Lower leg skin (tissue), 4 donors: ENCODE measurements at regions of chr15 and their contacts with region 1.

Region 1: GRCh38 chr15:53962332-53963241 is 15.7 kb upstream of the UNC13C start:
- DNase-seq: no peak
- H3K4me3 ChIP-seq: no peak overlapping the region
- CTCF ChIP-seq: no peak
- POLR2A ChIP-seq: no peak

Region 2: DNA sequence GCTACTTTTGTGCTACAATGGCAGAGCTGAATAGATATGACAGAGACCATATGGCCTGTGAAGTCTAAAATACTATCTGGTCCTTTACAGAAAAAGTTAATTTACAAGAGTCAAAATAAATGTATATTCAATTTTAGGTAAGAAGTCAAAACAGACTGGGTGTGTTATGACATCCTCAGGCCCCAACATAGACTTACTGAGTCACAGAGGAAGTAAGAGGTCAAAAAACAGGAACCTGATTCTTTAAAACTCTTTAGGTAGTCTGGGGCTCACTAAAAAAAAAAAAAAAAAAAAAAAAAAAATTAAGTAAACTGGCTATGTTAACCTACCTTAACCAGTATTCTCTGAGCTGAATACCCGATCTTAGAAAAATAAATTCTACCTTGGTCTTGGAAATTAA is 1532.3 kb after region 1 on chr15:
- intact Hi-C with region 1: loop called (anchors 5 kb)
- DNase-seq: no peak
- H3K4me3 ChIP-seq: no peak overlapping the region
- CTCF ChIP-seq: no peak
- POLR2A ChIP-seq: no peak